ENCODE measurements at regions of chr1 and their contacts with region 1.

Region 1: GRCh38 chr1:153572569-153573015 is 6.9 kb upstream of the S100A2 start:
- DNase-seq: peak; percentile 76
- ATAC-seq: peak; percentile 89
- H3K4me3 ChIP-seq: no peak overlapping the region
- H3K4me3 Mint-ChIP-seq: no peak overlapping the region
- H3K27ac ChIP-seq: no peak overlapping the region
- H3K27ac Mint-ChIP-seq: peak overlapping the region; percentile 56
- H3K4me1 ChIP-seq: peaks cover 4 to 22% of the 10 kb centered on the region in 2 donors
- H3K4me1 Mint-ChIP-seq: peaks cover 25% of the 10 kb centered on the region
- H3K27me3 ChIP-seq: peaks cover 0 to 2% (median under 1%) of the 10 kb centered on the region in 4 experiments
- H3K27me3 Mint-ChIP-seq: peaks cover 8% of the 10 kb centered on the region
- CTCF ChIP-seq: peak; percentile 80

Region 2: DNA sequence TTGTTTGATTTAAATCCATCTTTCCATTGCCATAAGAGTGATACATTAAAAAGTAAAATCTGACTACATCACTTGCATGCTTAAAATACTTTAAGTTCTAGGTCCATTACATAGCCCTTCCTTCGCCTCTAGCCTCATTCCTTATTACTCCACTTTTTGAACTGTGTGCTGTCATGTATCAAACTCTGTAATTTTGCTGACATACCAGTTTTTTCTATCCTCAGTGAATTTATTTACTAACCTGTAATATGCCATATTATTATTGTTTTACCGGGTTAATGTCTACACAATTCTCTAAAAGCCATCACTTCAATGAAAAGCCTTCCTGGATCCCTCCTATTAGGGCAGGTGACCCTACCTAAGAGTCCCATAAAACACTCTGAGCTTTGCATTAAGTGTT is 417.1 kb before region 1 on chr1:
- CTCF ChIA-PET with region 1: no interaction called
- POLR2A ChIA-PET with region 1: no interaction called
- intact Hi-C with region 1: no loop called
- DNase-seq: no peak
- ATAC-seq: no peak
- H3K4me3 ChIP-seq: no peak overlapping the region
- H3K4me3 Mint-ChIP-seq: no peak overlapping the region
- H3K27ac ChIP-seq: no peak overlapping the region
- H3K27ac Mint-ChIP-seq: no peak overlapping the region
- H3K4me1 ChIP-seq: no peaks in the 10 kb centered on the region
- H3K4me1 Mint-ChIP-seq: no peaks in the 10 kb centered on the region
- H3K27me3 ChIP-seq: peaks cover 0 to 14% (median 4%) of the 10 kb centered on the region in 4 experiments
- H3K27me3 Mint-ChIP-seq: peaks cover 23% of the 10 kb centered on the region
- CTCF ChIP-seq: no peak

Region 3: GRCh38 chr1:153478692-153479618 is 93.6 kb before region 1 on chr1:
- CTCF ChIA-PET with region 1: no interaction called
- POLR2A ChIA-PET with region 1: no interaction called
- intact Hi-C with region 1: no loop called
- DNase-seq: no peak
- ATAC-seq: no peak
- H3K4me3 ChIP-seq: no peak overlapping the region
- H3K4me3 Mint-ChIP-seq: no peak overlapping the region
- H3K27ac ChIP-seq: no peak overlapping the region
- H3K27ac Mint-ChIP-seq: no peak overlapping the region
- H3K4me1 ChIP-seq: no peaks in the 10 kb centered on the region
- H3K4me1 Mint-ChIP-seq: no peaks in the 10 kb centered on the region
- H3K27me3 ChIP-seq: peaks cover 0 to 24% (median 4%) of the 10 kb centered on the region in 4 experiments
- H3K27me3 Mint-ChIP-seq: peaks cover 63% of the 10 kb centered on the region
- CTCF ChIP-seq: no peak

Region 4: GRCh38 chr1:153510984-153511410 is 61.6 kb before region 1 on chr1:
- CTCF ChIA-PET with region 1: interaction called, 227 read pairs
- POLR2A ChIA-PET with region 1: interaction called, 4 read pairs
- intact Hi-C with region 1: loop called (anchors 1 kb)
- DNase-seq: peak; percentile 81
- ATAC-seq: peak; percentile 91
- H3K4me3 ChIP-seq: no peak overlapping the region
- H3K4me3 Mint-ChIP-seq: no peak overlapping the region
- H3K27ac ChIP-seq: no peak overlapping the region
- H3K27ac Mint-ChIP-seq: no peak overlapping the region
- H3K4me1 ChIP-seq: no peaks in the 10 kb centered on the region
- H3K4me1 Mint-ChIP-seq: no peaks in the 10 kb centered on the region
- H3K27me3 ChIP-seq: no peaks in the 10 kb centered on the region
- H3K27me3 Mint-ChIP-seq: peaks cover 4% of the 10 kb centered on the region
- CTCF ChIP-seq: peak; percentile 94

Region 5: GRCh38 chr1:153545067-153546055 is 27.2 kb before region 1 on chr1 and contains the start of gene S100A4:
- CTCF ChIA-PET with region 1: interaction called, 189 read pairs
- POLR2A ChIA-PET with region 1: interaction called, 3 read pairs
- intact Hi-C with region 1: no loop called
- DNase-seq: peak; percentile 55
- ATAC-seq: peak; percentile 77
- H3K4me3 ChIP-seq: peak within 1 kb of the TSS; percentile 33 to 80 (median 49)
- H3K4me3 Mint-ChIP-seq: peak within 1 kb of the TSS; percentile 90
- H3K27ac ChIP-seq: peak within 1 kb of the TSS; percentile 70 to 82
- H3K27ac Mint-ChIP-seq: peak within 1 kb of the TSS; percentile 96
- H3K4me1 ChIP-seq: peaks cover 36 to 42% of the 10 kb centered on the region in 2 donors
- H3K4me1 Mint-ChIP-seq: peaks cover 53% of the 10 kb centered on the region
- H3K27me3 ChIP-seq: peaks cover 0 to 5% (median 0%) of the 10 kb centered on the region in 4 experiments
- H3K27me3 Mint-ChIP-seq: no peaks in the 10 kb centered on the region
- CTCF ChIP-seq: no peak
- total RNA-seq, gene S100A4: 58.0 and 62.7 TPM in 2 replicates

Region 6: GRCh38 chr1:153626922-153627796 is 54.6 kb after region 1 on chr1 and contains the start of gene S100A13:
- CTCF ChIA-PET with region 1: interaction called, 26 read pairs
- POLR2A ChIA-PET with region 1: no interaction called
- intact Hi-C with region 1: no loop called
- DNase-seq: peak; percentile 40
- ATAC-seq: peak; percentile 17
- H3K4me3 ChIP-seq: peak within 1 kb of the TSS in 3 of 5 experiments; percentile 19 to 44 (median 37)
- H3K4me3 Mint-ChIP-seq: peak within 1 kb of the TSS; percentile 49
- H3K27ac ChIP-seq: no peak within 1 kb of the TSS
- H3K27ac Mint-ChIP-seq: peak within 1 kb of the TSS; percentile 10
- H3K4me1 ChIP-seq: peaks cover 9 to 26% of the 10 kb centered on the region in 2 donors
- H3K4me1 Mint-ChIP-seq: peaks cover 20% of the 10 kb centered on the region
- H3K27me3 ChIP-seq: peaks cover 0 to 4% (median 0%) of the 10 kb centered on the region in 4 experiments
- H3K27me3 Mint-ChIP-seq: no peaks in the 10 kb centered on the region
- CTCF ChIP-seq: peak; percentile 33
- total RNA-seq, gene S100A13: 5.7 and 9.8 TPM in 2 replicates

Region 7: GRCh38 chr1:153670859-153671627 is 98.5 kb after region 1 on chr1 and contains the start of gene ILF2:
- CTCF ChIA-PET with region 1: interaction called, 12 read pairs
- POLR2A ChIA-PET with region 1: interaction called, 3 read pairs
- intact Hi-C with region 1: loop called (anchors 1 kb)
- DNase-seq: peak; percentile 99
- ATAC-seq: peak; percentile 90
- H3K4me3 ChIP-seq: peak within 1 kb of the TSS; percentile 74 to 99 (median 94)
- H3K4me3 Mint-ChIP-seq: no peak within 1 kb of the TSS
- H3K27ac ChIP-seq: peak within 1 kb of the TSS; percentile 86 to 95
- H3K27ac Mint-ChIP-seq: no peak within 1 kb of the TSS
- H3K4me1 ChIP-seq: peaks cover 10 to 18% of the 10 kb centered on the region in 2 donors
- H3K4me1 Mint-ChIP-seq: peaks cover 18% of the 10 kb centered on the region
- H3K27me3 ChIP-seq: no peaks in the 10 kb centered on the region
- H3K27me3 Mint-ChIP-seq: peaks cover under 1% of the 10 kb centered on the region
- CTCF ChIP-seq: peak; percentile 26
- total RNA-seq, gene ILF2: 86.5 and 89.8 TPM in 2 replicates

Region 8: GRCh38 chr1:154272217-154272998 is 699.8 kb after region 1 on chr1 and contains the start of gene HAX1:
- CTCF ChIA-PET with region 1: no interaction called
- POLR2A ChIA-PET with region 1: no interaction called
- intact Hi-C with region 1: loop called (anchors 1 kb)
- DNase-seq: peak; percentile 99
- ATAC-seq: peak; percentile 91
- H3K4me3 ChIP-seq: peak within 1 kb of the TSS; percentile 88 to 99 (median 90)
- H3K4me3 Mint-ChIP-seq: peak within 1 kb of the TSS; percentile 90
- H3K27ac ChIP-seq: peak within 1 kb of the TSS; percentile 90 to 93
- H3K27ac Mint-ChIP-seq: peak within 1 kb of the TSS; percentile 94
- H3K4me1 ChIP-seq: peaks cover 14 to 21% of the 10 kb centered on the region in 2 donors
- H3K4me1 Mint-ChIP-seq: peaks cover 34% of the 10 kb centered on the region
- H3K27me3 ChIP-seq: no peaks in the 10 kb centered on the region
- H3K27me3 Mint-ChIP-seq: no peaks in the 10 kb centered on the region
- CTCF ChIP-seq: peak; percentile 82
- total RNA-seq, gene HAX1: 74.2 and 85.7 TPM in 2 replicates